ENCODE measurements at regions of chr15 and their contacts with region 1.

Region 1: GRCh38 chr15:79901958-79902357 is 5.1 kb upstream of the MTHFS start:
- DNase-seq: no peak
- ATAC-seq: no peak
- H3K4me3 ChIP-seq: no peak overlapping the region
- H3K27ac ChIP-seq: no peak overlapping the region
- H3K4me1 ChIP-seq: peaks cover 0 to 5% of the 10 kb centered on the region in 2 donors
- H3K27me3 ChIP-seq: no peaks in the 10 kb centered on the region
- CTCF ChIP-seq: no peak
- POLR2A ChIP-seq: no peak

Region 2: GRCh38 chr15:79644091-79644490 is 257.9 kb before region 1 on chr15:
- in situ Hi-C with region 1: no loop called
- intact Hi-C with region 1: no loop called
- DNase-seq: no peak
- ATAC-seq: no peak
- H3K4me3 ChIP-seq: no peak overlapping the region
- H3K27ac ChIP-seq: no peak overlapping the region
- H3K4me1 ChIP-seq: no peaks in the 10 kb centered on the region
- H3K27me3 ChIP-seq: no peaks in the 10 kb centered on the region
- CTCF ChIP-seq: no peak
- POLR2A ChIP-seq: no peak

Region 3: GRCh38 chr15:79932447-79932846 is 30.5 kb after region 1 on chr15:
- in situ Hi-C with region 1: no loop called
- intact Hi-C with region 1: no loop called
- DNase-seq: no peak
- ATAC-seq: no peak
- H3K4me3 ChIP-seq: no peak overlapping the region
- H3K27ac ChIP-seq: no peak overlapping the region
- H3K4me1 ChIP-seq: no peaks in the 10 kb centered on the region
- H3K27me3 ChIP-seq: peaks cover 0 to 5% (median 3%) of the 10 kb centered on the region in 3 donors
- CTCF ChIP-seq: no peak
- POLR2A ChIP-seq: no peak

Region 4: GRCh38 chr15:79989682-79990081 is 87.7 kb after region 1 on chr15:
- in situ Hi-C with region 1: loop called in 1 of 4 experiments (anchors 10 kb)
- intact Hi-C with region 1: no loop called
- DNase-seq: no peak
- ATAC-seq: no peak
- H3K4me3 ChIP-seq: no peak overlapping the region
- H3K27ac ChIP-seq: no peak overlapping the region
- H3K4me1 ChIP-seq: peaks cover 0 to 2% of the 10 kb centered on the region in 2 donors
- H3K27me3 ChIP-seq: no peaks in the 10 kb centered on the region
- CTCF ChIP-seq: no peak
- POLR2A ChIP-seq: no peak

Region 5: DNA sequence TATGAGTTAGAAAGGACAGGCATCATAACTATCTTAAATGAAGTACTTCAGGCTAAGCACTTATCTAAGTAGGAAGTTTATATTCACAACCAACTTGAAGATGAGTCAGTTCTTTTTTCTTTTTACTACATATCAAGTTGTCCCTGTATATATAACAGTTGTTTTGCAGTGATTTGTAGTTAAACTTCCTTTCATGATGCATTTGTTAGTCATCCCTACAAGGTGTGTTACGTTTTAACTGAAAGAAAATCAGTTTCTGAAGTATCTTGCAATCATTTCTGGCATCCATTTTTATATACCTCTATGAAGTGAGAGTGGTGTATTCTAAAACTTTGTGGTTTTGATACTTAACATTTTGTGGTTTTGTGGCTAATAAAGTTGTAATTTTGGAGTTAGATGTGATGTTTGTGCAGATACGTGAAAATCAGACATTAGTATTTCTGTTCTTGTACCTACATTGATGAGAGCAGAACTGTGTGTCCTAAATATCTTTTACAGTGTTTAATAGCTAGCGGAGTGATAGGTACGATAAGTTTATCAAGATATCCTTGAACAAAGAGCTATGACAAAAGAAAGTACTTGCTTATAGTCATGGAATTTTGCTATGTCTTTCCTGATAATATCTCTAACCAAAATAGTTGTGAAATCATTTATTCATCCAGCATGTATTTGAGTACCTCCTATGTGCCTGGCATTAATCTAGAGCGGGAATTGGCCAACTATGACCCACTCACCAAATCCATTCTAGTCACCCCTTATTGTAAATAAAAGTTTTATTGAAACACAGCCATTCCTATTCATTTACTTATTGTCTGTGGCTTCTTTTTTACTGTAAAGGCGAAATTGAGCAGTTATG is 203.9 kb after region 1 on chr15:
- in situ Hi-C with region 1: no loop called
- intact Hi-C with region 1: no loop called
- DNase-seq: no peak
- ATAC-seq: no peak
- H3K4me3 ChIP-seq: no peak overlapping the region
- H3K27ac ChIP-seq: no peak overlapping the region
- H3K4me1 ChIP-seq: peaks cover 41 to 47% of the 10 kb centered on the region in 2 donors
- H3K27me3 ChIP-seq: no peaks in the 10 kb centered on the region
- CTCF ChIP-seq: no peak
- POLR2A ChIP-seq: no peak